ENCODE measurements at regions of chr20 and their contacts with region 1.

Region 1: DNA sequence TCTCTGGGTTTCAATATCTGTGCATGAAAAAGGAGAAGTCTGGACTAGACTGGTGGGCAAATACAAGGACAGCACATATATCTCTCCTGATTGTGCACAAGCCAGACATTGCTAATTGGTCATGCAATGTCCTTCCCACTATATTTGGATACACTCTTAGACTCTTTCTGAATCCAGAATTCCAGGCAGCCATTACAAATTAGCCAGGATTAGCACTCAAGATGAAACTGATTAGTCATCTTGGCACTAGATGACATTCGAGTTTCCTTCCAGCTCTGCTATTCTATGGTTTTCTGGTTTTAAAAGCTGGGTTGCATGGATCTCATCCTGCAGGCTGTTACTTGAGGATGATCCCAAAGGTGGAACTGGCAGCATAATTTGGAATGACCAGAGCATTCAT is 73.2 kb downstream of the SCP2D1 start:
- DNase-seq: no peak
- H3K4me3 ChIP-seq: no peak overlapping the region
- H3K27ac ChIP-seq: no peak overlapping the region
- H3K4me1 ChIP-seq: no peaks in the 10 kb centered on the region
- H3K27me3 ChIP-seq: no peaks in the 10 kb centered on the region
- CTCF ChIP-seq: no peak
- POLR2A ChIP-seq: no peak

Region 2: DNA sequence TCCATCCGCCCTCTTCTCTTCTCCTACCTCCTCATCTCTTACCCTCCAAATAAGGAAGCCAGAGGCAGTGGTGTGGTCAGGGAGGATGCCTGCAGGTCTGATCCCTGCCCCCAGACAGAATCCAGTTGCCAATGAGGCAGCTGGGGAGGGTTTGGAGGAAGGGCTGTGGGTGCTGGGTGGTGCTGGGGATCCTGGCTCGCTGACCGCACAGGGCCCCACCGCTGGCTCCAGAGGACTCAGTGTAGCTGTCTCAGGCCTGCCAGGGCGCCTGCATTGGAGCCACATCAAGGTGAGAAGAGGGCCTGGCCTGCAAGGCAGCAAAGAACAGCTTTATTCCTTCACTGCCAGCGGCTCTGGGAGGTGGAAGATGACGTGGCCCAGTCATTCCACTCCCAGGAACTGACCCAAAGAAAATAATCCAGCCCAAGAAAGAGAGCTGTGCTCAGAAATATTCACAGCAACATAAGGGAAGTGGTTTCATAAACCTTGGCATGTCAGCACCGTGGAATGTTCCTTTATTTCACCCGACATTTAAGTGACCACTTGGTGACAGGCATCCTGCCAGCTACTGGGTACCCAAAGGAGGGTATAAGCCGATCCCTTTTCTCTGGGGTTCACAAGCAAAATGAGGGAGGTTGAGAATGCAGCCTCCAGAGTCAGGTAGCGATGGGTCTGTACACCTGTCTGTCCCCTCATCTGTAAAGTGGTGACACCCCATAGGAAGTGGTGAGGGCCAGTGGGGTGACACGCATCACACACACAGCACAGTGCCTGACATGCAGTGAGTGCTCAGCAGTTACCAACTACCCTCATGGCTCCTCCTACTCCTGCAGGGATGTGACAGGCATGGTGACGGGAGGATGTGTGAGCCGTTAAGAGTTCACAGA is 1043.3 kb before region 1 on chr20:
- intact Hi-C with region 1: loop called (anchors 10 kb)
- DNase-seq: peak in 1 of 2 donors; percentile 76
- H3K4me3 ChIP-seq: no peak overlapping the region
- H3K27ac ChIP-seq: peak overlapping the region; percentile 76 to 89
- H3K4me1 ChIP-seq: peaks cover 5 to 6% of the 10 kb centered on the region in 2 donors
- H3K27me3 ChIP-seq: no peaks in the 10 kb centered on the region
- CTCF ChIP-seq: no peak
- POLR2A ChIP-seq: no peak